ENCODE measurements at regions of chr11 and their contacts with region 1.

Region 1: DNA sequence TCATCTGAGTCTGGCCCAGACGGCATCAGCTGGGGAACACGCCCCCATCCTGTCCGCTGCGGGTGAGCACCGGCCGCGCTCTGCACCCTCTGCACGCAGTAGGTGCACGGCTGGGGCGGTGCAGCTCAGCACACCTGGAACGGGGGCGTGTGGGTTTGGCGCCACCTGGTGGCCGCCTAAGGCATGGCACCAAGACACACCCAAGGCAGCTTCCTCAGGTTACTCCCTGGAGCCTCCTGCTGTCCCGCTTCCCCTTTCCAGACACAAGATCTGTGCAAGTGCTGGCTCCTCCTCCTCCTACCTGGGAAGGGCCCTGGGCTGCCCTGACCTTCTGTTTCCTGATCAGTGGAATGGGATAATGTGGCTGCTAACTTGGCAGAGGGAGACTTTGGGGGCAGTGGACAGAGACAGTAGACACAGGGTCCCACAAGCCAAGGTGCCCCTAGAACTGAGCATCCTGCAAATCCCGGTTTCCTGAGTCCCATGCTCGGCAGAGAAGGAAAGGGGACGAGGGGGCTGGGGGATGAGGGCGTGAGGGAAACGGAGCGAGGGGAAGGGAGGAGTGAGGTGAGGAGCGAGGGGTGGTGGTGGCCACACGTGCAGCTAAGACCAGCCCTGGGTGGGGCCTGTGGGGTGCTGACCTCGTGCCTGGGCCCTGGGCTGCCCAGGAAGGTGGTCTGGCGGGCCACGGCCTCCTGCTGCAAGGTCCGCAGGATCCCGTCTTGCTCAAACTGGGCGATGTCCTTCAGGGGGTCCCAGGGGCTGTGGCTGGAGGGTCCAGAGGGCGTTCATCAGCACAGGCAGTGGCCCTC is 34.8 kb upstream of the CARS1 start:
- DNase-seq: peak; percentile 88
- ATAC-seq: peak; percentile 67
- H3K4me3 ChIP-seq: no peak overlapping the region
- H3K27ac ChIP-seq: no peak overlapping the region
- H3K4me1 ChIP-seq: peaks cover 31% of the 10 kb centered on the region
- H3K27me3 ChIP-seq: no peaks in the 10 kb centered on the region
- CTCF ChIP-seq: peak; percentile 96

Region 2: GRCh38 chr11:2975594-2975993 is 116.4 kb before region 1 on chr11:
- CTCF ChIA-PET with region 1: interaction called, 10 read pairs
- POLR2A ChIA-PET with region 1: no interaction called
- intact Hi-C with region 1: no loop called
- DNase-seq: peak; percentile 44
- ATAC-seq: peak; percentile 88
- H3K4me3 ChIP-seq: no peak overlapping the region
- H3K27ac ChIP-seq: no peak overlapping the region
- H3K4me1 ChIP-seq: no peaks in the 10 kb centered on the region
- H3K27me3 ChIP-seq: no peaks in the 10 kb centered on the region
- CTCF ChIP-seq: peak; percentile 59

Region 3: DNA sequence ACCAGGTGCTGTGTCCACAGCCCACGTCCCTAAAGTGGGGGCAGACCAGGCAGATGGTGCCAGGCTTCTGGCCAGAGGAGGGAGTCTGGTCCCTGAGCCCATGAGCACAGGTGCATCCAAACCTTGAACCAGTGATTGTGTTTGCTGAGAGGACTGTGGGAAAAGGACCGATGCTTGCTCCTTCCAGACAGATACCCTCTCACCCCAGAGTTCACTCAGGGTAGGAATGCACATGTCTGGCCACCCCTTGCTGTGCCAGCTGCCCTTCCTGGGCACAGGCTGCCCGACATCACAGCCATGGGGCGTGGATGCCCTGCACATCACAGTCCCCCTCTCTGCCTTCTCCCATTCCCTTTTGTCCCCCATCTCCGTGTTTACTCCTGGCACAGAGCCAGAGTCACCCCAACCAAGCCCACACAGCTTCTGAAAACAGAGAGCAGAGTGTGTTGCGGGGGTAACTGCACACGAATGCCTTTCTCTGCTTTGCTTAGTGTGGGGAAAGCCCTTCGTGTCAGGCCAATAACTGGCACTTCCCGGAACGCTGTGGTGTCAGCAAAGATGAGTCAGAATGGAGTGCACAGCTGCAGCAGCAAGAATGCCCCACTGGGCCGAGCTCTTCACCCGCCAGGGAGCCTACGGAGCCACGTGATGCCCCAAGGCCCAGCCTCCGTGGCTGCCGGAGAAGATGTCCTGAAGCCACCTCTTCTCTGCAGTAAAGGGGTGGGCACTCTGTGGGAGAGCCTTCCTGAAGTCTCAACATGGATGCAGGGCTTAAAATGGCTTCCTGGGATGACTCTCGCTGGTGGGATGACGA is 42.4 kb before region 1 on chr11:
- CTCF ChIA-PET with region 1: interaction called, 13 read pairs
- POLR2A ChIA-PET with region 1: no interaction called
- intact Hi-C with region 1: no loop called
- DNase-seq: peak; percentile 86
- ATAC-seq: peak; percentile 98
- H3K4me3 ChIP-seq: peak overlapping the region; percentile 24; the same call in 1 of the 2 replicates
- H3K27ac ChIP-seq: peak overlapping the region; percentile 67
- H3K4me1 ChIP-seq: peaks cover 15% of the 10 kb centered on the region
- H3K27me3 ChIP-seq: no peaks in the 10 kb centered on the region
- CTCF ChIP-seq: peak; percentile 39

Region 4: DNA sequence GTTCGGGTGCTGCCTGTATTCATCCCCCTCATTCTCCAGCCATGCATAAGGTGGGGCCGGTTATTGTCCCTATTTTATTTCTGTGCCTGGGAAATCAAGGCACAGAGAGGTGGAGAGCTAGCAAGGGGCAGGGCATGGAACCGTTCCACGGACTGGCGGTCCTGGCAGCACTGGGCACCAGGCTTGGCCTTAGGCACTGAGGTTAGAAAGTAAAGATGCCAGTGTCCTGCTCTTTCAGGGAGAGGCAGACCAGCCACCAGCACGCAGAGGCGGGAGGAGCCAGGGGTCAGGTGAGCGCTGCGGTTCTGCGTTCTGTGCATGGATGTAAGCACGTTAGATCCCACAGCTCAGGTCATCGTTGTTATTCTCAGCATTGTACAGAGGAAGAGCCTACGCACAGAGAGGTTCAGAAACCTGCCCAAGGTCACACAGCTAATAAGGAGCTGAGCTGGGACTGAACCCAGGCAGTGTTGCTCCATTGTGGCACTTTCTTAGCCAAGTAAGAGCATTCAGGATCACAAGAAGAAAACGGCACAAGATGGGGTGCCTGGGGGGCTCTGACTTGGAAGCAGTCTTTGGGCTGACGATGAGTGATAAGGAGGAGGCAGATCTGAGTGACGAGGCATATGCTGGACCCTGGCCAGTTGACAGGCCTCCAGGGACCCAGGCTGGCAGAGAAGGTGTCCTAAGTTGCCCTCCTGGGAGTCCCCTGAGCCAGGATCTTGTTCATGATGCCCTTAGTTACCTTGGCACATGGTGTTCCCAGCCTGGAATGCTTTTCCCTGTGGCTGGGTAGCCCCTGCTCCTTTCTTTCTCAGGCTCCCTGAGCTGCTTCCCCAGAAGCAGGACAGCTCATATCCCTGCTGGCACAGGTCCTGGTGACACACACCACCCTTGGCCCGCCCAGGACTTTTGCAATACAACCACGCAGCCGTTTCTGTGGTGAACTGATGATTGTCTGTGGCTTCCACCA is 32.0 kb after region 1 on chr11:
- CTCF ChIA-PET with region 1: interaction called, 3 read pairs
- POLR2A ChIA-PET with region 1: no interaction called
- intact Hi-C with region 1: loop called (anchors 2 kb)
- DNase-seq: peak; percentile 94
- ATAC-seq: peak; percentile 84
- H3K4me3 ChIP-seq: peak overlapping the region; percentile 1; the same call in 1 of the 2 replicates
- H3K27ac ChIP-seq: peak overlapping the region; percentile 73
- H3K4me1 ChIP-seq: peaks cover 31% of the 10 kb centered on the region
- H3K27me3 ChIP-seq: no peaks in the 10 kb centered on the region
- CTCF ChIP-seq: no peak

Region 5: DNA sequence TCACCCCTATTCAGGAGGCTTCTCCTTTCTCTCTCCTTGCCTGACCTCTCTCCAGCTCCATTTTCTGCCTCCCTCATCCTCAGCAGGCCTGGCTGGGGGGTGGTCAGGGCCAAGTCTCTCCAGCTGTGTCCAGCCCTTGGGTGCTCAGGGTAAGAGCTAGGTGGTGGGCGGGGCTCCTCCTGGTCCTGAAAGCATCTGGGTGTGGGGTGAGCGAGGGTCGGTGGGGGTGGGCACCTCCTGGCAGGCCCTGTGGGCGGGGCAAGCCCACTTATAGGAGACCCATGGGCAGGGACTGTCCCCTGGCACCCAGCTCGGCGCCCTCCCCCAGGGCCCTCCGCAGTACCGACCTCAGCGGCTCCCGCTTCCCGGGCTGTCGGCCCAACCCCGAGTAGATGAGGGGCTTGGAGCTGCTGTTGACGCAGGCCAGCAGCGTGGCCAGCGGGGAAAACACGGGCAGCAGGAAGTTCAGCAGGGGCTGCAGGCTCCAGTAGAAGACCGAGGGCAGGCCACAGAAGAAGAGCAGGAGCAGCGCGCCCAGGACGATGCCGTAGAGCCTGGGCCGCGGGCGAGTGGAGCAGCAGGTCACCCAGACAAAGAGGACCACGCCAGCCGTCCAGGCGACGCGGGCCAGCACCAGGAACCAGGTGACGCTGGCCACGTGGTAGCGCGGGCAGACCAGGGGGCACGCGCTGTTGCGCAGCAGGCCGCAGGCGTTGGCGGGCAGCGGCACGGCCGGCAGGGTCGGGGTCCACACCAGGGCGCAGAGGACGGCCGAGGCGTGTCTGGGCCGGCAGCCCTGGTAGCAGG is 125.9 kb after region 1 on chr11:
- CTCF ChIA-PET with region 1: no interaction called
- POLR2A ChIA-PET with region 1: no interaction called
- intact Hi-C with region 1: loop called (anchors 5 kb)
- DNase-seq: no peak
- ATAC-seq: no peak
- H3K4me3 ChIP-seq: no peak overlapping the region
- H3K27ac ChIP-seq: no peak overlapping the region
- H3K4me1 ChIP-seq: no peaks in the 10 kb centered on the region
- H3K27me3 ChIP-seq: peaks cover 30% of the 10 kb centered on the region
- CTCF ChIP-seq: no peak

Measured in PC-3 (cell line).